Natural killer cell (primary cell): ENCODE measurements at regions of chr2 and their contacts with region 1.

Region 1: DNA sequence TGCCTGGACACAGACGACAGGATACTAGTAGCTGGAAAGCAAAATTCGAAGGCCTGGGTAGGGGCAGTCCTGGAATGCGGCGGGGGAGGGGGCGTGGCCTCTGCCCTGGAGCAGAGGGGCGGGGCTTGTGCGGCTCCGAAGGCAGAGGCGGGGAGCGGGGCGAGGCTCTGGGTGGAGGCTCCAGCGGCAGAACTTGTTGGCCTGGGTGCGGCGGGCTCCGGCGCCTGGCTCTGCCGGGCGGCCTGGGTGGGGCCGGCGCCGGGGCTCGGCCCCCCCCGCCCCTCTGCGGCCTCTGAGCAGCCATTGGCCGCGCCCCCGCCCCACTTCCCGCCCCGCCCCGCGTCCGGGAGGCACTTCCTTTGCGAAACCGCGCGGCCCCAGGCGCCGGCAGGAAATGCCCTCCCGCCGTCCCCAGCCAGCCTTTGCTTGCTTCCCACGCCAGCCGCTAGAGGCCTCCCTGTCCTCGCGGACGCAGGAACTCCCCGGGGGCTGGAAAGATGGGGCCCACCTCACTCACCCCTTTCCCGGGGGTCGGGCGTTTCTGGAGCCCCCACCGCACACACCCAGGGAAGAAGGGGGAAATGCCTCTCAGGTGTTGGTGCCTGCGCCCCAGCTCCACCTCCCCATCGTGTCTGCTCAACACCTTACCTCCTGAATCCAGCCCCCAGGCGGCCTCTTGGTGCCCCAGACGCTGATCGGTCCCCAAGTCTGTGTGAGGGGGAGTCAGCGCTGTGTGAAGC is 6.7 kb downstream of the CTDSP1 start:
- DNase-seq: peak; percentile 86 to 94
- ATAC-seq: peak; percentile 72 to 89 (median 86)
- H3K4me3 ChIP-seq: peak overlapping the region; percentile 25
- H3K4me3 Mint-ChIP-seq: peak overlapping the region; percentile 91
- H3K27ac ChIP-seq: peak overlapping the region; percentile 71
- H3K27ac Mint-ChIP-seq: peak overlapping the region; percentile 95 to 96
- H3K4me1 ChIP-seq: peaks cover 66% of the 10 kb centered on the region
- H3K4me1 Mint-ChIP-seq: peaks cover 48 to 70% of the 10 kb centered on the region in 2 donors
- H3K27me3 ChIP-seq: no peaks in the 10 kb centered on the region
- H3K27me3 Mint-ChIP-seq: no peaks in the 10 kb centered on the region
- CTCF ChIP-seq: peak; percentile 61

Region 2: GRCh38 chr2:218063486-218063885 is 342.9 kb before region 1 on chr2:
- intact Hi-C with region 1: no loop called
- DNase-seq: no peak
- ATAC-seq: peak in 2 of 3 donors; percentile 21 to 41
- H3K4me3 ChIP-seq: no peak overlapping the region
- H3K4me3 Mint-ChIP-seq: no peak overlapping the region
- H3K27ac ChIP-seq: no peak overlapping the region
- H3K27ac Mint-ChIP-seq: no peak overlapping the region
- H3K4me1 ChIP-seq: peaks cover 18% of the 10 kb centered on the region
- H3K4me1 Mint-ChIP-seq: peaks cover 8 to 18% of the 10 kb centered on the region in 2 donors
- H3K27me3 ChIP-seq: no peaks in the 10 kb centered on the region
- H3K27me3 Mint-ChIP-seq: peaks cover 18 to 22% of the 10 kb centered on the region in 2 donors
- CTCF ChIP-seq: no peak

Region 3: GRCh38 chr2:218466016-218466521 is 59.7 kb after region 1 on chr2:
- intact Hi-C with region 1: loop called (anchors 1 kb)
- DNase-seq: peak in 1 of 2 donors; percentile 48
- ATAC-seq: peak in 2 of 3 donors; percentile 45 to 47
- H3K4me3 ChIP-seq: no peak overlapping the region
- H3K4me3 Mint-ChIP-seq: no peak overlapping the region
- H3K27ac ChIP-seq: no peak overlapping the region
- H3K27ac Mint-ChIP-seq: peak overlapping the region in 1 of 2 donors; percentile 36
- H3K4me1 ChIP-seq: no peaks in the 10 kb centered on the region
- H3K4me1 Mint-ChIP-seq: peaks cover 18% of the 10 kb centered on the region in 2 donors
- H3K27me3 ChIP-seq: no peaks in the 10 kb centered on the region
- H3K27me3 Mint-ChIP-seq: no peaks in the 10 kb centered on the region
- CTCF ChIP-seq: peak; percentile 65

Region 4: GRCh38 chr2:218648088-218648786 is 241.9 kb after region 1 on chr2:
- intact Hi-C with region 1: loop called (anchors 2 kb)
- DNase-seq: peak; percentile 30 to 76
- ATAC-seq: peak; percentile 78 to 94 (median 90)
- H3K4me3 ChIP-seq: no peak overlapping the region
- H3K4me3 Mint-ChIP-seq: no peak overlapping the region
- H3K27ac ChIP-seq: no peak overlapping the region
- H3K27ac Mint-ChIP-seq: peak overlapping the region in 1 of 2 donors; percentile 21
- H3K4me1 ChIP-seq: no peaks in the 10 kb centered on the region
- H3K4me1 Mint-ChIP-seq: peaks cover 17 to 18% of the 10 kb centered on the region in 2 donors
- H3K27me3 ChIP-seq: no peaks in the 10 kb centered on the region
- H3K27me3 Mint-ChIP-seq: no peaks in the 10 kb centered on the region
- CTCF ChIP-seq: peak; percentile 73